ENCODE measurements at regions of chr3 and their contacts with region 1.

Region 1: GRCh38 chr3:176855956-176856355 is 341.3 kb downstream of the TBL1XR1 start:
- DNase-seq: no peak
- ATAC-seq: no peak
- H3K4me3 ChIP-seq: no peak overlapping the region
- H3K27ac ChIP-seq: no peak overlapping the region
- H3K4me1 ChIP-seq: no peaks in the 10 kb centered on the region
- H3K27me3 ChIP-seq: no peaks in the 10 kb centered on the region
- CTCF ChIP-seq: no peak

Region 2: GRCh38 chr3:176789281-176789705 is 66.7 kb before region 1 on chr3:
- intact Hi-C with region 1: no loop called
- DNase-seq: no peak
- ATAC-seq: no peak
- H3K4me3 ChIP-seq: no peak overlapping the region
- H3K27ac ChIP-seq: no peak overlapping the region
- H3K4me1 ChIP-seq: peaks cover 0 to 9% (median 0%) of the 10 kb centered on the region in 9 donors
- H3K27me3 ChIP-seq: no peaks in the 10 kb centered on the region
- CTCF ChIP-seq: no peak

Region 3: DNA sequence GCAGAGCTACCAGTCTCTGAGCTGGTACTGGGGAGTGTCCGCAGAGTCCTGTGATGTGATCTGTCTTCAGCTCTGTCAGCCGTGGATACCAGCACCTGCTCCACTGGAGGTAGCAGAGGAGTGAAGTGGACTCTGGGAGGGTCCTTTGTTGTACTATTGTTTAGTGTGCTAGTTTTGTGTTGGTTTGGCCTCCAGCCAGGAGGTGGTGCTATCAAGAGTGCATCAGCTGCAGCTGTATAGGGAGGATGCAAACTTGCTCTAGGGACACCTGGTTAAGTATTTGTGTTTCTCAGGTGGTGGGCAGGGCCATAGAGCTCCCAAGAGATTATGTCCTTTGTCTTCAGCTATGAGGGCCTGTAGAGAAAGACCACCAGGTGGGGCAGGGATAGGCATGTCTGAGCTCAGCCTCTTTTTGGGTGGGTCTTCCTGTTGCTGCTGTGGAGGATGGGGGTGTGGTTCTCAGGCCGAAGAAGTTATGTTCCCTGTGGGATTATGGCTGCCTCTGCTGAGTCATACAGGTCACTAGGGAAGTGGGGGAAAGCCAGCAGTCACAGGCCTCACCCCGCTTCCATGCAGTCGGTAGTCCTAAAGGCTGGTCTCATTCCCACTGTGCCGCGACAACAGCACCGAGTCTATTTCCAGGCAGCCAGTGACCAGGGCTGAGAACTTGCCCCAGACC is 784.5 kb after region 1 on chr3:
- intact Hi-C with region 1: loop called in 1 of 10 experiments (anchors 5 kb)
- DNase-seq: no peak
- ATAC-seq: peak in 5 of 8 donors; percentile 39 to 55 (median 53)
- H3K4me3 ChIP-seq: no peak overlapping the region
- H3K27ac ChIP-seq: no peak overlapping the region
- H3K4me1 ChIP-seq: peaks cover 0 to 20% (median 7%) of the 10 kb centered on the region in 9 donors
- H3K27me3 ChIP-seq: no peaks in the 10 kb centered on the region
- CTCF ChIP-seq: no peak

Measured in heart right ventricle (tissue), 16 donors.